ENCODE measurements at regions of chr7 and their contacts with region 1.

Region 1: DNA sequence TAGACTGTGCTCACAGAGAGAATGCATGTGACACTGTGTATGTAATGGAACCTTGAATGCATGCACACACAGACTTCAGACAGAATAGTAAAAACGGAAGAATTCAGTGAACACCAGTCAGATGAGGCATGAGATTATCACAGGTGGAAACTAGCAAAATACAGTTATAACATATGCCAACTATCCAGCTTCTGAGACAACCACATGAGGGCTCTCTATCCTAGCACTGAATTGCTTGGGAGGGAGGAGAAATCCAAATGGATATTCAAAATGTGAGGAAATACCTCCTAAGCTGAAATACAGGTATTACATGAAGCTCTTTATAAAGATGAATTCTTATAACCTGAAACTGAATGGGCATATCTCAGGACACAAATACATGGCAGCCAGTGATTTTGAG is 30.6 kb downstream of the GARS1 start:
- DNase-seq: no peak
- ATAC-seq: no peak
- H3K4me3 Mint-ChIP-seq: no peak overlapping the region
- H3K27ac Mint-ChIP-seq: no peak overlapping the region
- H3K4me1 Mint-ChIP-seq: no peaks in the 10 kb centered on the region
- H3K27me3 Mint-ChIP-seq: no peaks in the 10 kb centered on the region
- CTCF ChIP-seq: no peak

Region 2: DNA sequence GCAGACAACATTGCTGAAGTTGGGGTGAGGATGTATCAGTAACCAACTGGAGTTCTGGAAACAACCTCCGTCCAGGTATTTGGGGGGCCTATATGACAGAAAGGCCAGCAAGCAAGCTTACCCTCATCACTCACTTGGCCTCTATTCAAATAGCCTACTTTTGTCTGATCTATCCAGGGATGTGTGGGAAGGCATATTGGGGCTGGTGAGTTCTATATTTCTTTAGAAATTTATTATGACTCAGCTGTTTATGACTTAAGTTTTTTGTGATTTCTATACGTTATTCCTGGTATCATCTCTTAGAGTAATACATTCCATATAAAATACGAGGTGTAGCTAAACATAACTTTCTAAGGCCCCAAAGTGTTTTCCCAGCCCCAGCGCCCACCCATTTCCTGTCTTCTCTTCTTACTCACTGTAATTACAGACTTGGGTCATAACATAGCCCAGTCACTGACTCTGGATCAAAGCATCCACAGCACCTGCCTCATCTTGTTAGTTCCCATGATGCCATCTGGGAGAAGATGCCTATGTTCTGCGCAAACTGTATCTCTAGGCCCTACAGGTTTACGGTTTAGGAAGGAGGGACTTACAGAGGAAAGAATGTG is 12.5 kb before region 1 on chr7:
- CTCF ChIA-PET with region 1: no interaction called
- POLR2A ChIA-PET with region 1: no interaction called
- intact Hi-C with region 1: loop called (anchors 2 kb)
- DNase-seq: no peak
- ATAC-seq: no peak
- H3K4me3 Mint-ChIP-seq: no peak overlapping the region
- H3K27ac Mint-ChIP-seq: no peak overlapping the region
- H3K4me1 Mint-ChIP-seq: no peaks in the 10 kb centered on the region
- H3K27me3 Mint-ChIP-seq: no peaks in the 10 kb centered on the region
- CTCF ChIP-seq: no peak

Measured in activated B cell treated with CpG ODN at 0.5 μM for 24 hours (primary cell).